ENCODE measurements at regions of chr13 and their contacts with region 1.

Region 1: GRCh38 chr13:46126552-46127357 is 21.9 kb upstream of the CPB2 start:
- DNase-seq: no peak
- H3K4me3 ChIP-seq: no peak overlapping the region
- H3K27me3 ChIP-seq: peaks cover 2% of the 10 kb centered on the region; the same call in 1 of the 2 replicates
- CTCF ChIP-seq: peak; percentile 85

Region 2: DNA sequence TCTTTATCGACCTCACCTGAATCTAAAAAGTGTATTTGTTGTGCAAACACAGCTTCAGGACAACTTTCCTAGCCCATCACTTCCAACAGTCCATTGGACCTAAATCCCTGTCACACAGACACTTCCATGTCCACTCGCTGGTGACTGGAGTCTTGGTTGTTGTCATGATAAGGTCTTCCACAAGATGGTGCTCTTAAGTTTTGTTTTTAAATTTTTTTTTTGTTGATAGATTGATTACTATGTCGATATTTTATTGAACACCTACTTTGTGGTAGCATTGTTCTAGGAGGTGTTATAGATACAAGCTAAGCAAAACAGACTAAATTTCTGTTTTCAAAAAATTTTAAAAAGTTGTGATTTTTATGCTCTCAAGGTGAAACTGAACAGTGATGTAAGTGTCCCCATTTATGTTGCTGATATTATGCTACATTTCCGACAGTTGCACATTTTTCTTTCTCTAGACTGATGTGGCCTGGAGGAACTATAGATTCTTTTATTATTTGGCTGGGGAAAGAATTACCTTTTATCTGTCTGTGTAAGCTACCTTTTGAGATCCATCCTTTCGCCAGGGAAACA is 503.2 kb before region 1 on chr13:
- CTCF ChIA-PET with region 1: interaction called, 22 read pairs
- POLR2A ChIA-PET with region 1: no interaction called
- DNase-seq: no peak
- H3K4me3 ChIP-seq: no peak overlapping the region
- H3K27me3 ChIP-seq: peaks cover 12% of the 10 kb centered on the region
- CTCF ChIP-seq: peak; percentile 51

Region 3: DNA sequence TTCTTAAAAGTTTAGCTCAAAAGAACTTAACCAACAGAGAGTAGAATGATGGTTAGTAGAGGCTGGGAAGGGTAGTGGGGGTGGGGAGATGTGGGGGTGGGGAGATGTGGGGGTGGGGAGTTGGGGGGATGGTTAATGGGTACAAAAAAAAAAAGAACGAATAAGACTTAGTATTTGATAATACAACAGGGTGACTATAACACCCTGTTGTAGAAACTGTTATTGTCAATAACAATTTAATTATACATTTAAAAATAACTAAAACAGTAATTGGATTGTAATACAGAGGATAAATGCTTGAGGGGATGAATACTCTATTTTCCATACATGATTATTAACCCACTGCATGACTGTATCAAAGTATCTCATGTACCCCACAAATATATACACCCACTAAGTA is 165.3 kb before region 1 on chr13:
- CTCF ChIA-PET with region 1: no interaction called
- POLR2A ChIA-PET with region 1: no interaction called
- DNase-seq: no peak
- H3K4me3 ChIP-seq: no peak overlapping the region
- H3K27me3 ChIP-seq: no peaks in the 10 kb centered on the region
- CTCF ChIP-seq: no peak

Region 4: GRCh38 chr13:46149272-46150133 is 22.7 kb after region 1 on chr13:
- CTCF ChIA-PET with region 1: interaction called, 11 read pairs
- POLR2A ChIA-PET with region 1: no interaction called
- DNase-seq: no peak
- H3K4me3 ChIP-seq: no peak overlapping the region
- H3K27me3 ChIP-seq: no peaks in the 10 kb centered on the region; the same call in 1 of the 2 replicates
- CTCF ChIP-seq: no peak

Region 5: DNA sequence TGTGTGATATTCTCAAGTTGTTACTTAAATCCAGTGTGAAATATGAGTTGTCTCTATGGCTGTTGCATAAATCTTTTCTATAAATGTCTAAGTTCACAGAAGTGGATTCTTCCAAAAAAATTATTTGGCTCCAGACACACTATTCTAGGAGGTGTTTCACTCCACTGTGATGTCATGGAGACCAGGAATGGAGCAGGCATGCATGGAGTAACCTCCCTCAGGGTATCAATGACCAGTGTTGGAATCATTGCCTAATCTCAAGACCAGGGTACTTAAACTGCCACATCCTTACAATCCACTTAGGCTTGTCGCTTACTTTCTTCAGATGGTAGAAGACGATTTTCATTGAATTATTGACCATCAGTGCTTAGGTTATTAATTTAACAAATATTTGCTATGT is 140.4 kb after region 1 on chr13:
- CTCF ChIA-PET with region 1: no interaction called
- POLR2A ChIA-PET with region 1: no interaction called
- DNase-seq: no peak
- H3K4me3 ChIP-seq: no peak overlapping the region
- H3K27me3 ChIP-seq: no peaks in the 10 kb centered on the region
- CTCF ChIP-seq: no peak